Thyroid gland (tissue), 4 donors: ENCODE measurements at regions of chr4 and their contacts with region 1.

Region 1: GRCh38 chr4:10239982-10240654 is 123.5 kb upstream of the WDR1 start:
- DNase-seq: no peak
- H3K4me3 ChIP-seq: no peak overlapping the region
- H3K27ac ChIP-seq: no peak overlapping the region
- H3K4me1 ChIP-seq: no peaks in the 10 kb centered on the region
- H3K27me3 ChIP-seq: no peaks in the 10 kb centered on the region
- CTCF ChIP-seq: no peak
- POLR2A ChIP-seq: no peak

Region 2: GRCh38 chr4:10054571-10055041 is 185.5 kb before region 1 on chr4:
- intact Hi-C with region 1: no loop called
- DNase-seq: peak in 1 of 2 donors; percentile 12
- H3K4me3 ChIP-seq: no peak overlapping the region
- H3K27ac ChIP-seq: peak overlapping the region; percentile 63 to 75 (median 68)
- H3K4me1 ChIP-seq: peaks cover 18 to 23% of the 10 kb centered on the region in 2 donors
- H3K27me3 ChIP-seq: no peaks in the 10 kb centered on the region
- CTCF ChIP-seq: no peak
- POLR2A ChIP-seq: no peak

Region 3: GRCh38 chr4:10204401-10205058 is 35.6 kb before region 1 on chr4:
- intact Hi-C with region 1: loop called (anchors 2 kb)
- DNase-seq: no peak
- H3K4me3 ChIP-seq: no peak overlapping the region
- H3K27ac ChIP-seq: no peak overlapping the region
- H3K4me1 ChIP-seq: no peaks in the 10 kb centered on the region
- H3K27me3 ChIP-seq: no peaks in the 10 kb centered on the region
- CTCF ChIP-seq: no peak
- POLR2A ChIP-seq: no peak

Region 4: GRCh38 chr4:10371869-10372471 is 131.9 kb after region 1 on chr4:
- intact Hi-C with region 1: no loop called
- DNase-seq: no peak
- H3K4me3 ChIP-seq: no peak overlapping the region
- H3K27ac ChIP-seq: no peak overlapping the region
- H3K4me1 ChIP-seq: no peaks in the 10 kb centered on the region
- H3K27me3 ChIP-seq: no peaks in the 10 kb centered on the region
- CTCF ChIP-seq: no peak
- POLR2A ChIP-seq: no peak